ENCODE measurements at regions of chr9 and their contacts with region 1.

Region 1: GRCh38 chr9:15277400-15278090 is 29.5 kb downstream of the TTC39B start:
- DNase-seq: no peak
- H3K4me3 Mint-ChIP-seq: no peak overlapping the region
- H3K27ac Mint-ChIP-seq: no peak overlapping the region
- H3K4me1 Mint-ChIP-seq: peaks cover 15% of the 10 kb centered on the region
- H3K27me3 Mint-ChIP-seq: no peaks in the 10 kb centered on the region

Region 2: GRCh38 chr9:15142878-15143534 is 134.5 kb before region 1 on chr9:
- intact Hi-C with region 1: no loop called
- DNase-seq: no peak
- H3K4me3 Mint-ChIP-seq: no peak overlapping the region
- H3K27ac Mint-ChIP-seq: no peak overlapping the region
- H3K4me1 Mint-ChIP-seq: no peaks in the 10 kb centered on the region
- H3K27me3 Mint-ChIP-seq: peaks cover 10% of the 10 kb centered on the region

Region 3: DNA sequence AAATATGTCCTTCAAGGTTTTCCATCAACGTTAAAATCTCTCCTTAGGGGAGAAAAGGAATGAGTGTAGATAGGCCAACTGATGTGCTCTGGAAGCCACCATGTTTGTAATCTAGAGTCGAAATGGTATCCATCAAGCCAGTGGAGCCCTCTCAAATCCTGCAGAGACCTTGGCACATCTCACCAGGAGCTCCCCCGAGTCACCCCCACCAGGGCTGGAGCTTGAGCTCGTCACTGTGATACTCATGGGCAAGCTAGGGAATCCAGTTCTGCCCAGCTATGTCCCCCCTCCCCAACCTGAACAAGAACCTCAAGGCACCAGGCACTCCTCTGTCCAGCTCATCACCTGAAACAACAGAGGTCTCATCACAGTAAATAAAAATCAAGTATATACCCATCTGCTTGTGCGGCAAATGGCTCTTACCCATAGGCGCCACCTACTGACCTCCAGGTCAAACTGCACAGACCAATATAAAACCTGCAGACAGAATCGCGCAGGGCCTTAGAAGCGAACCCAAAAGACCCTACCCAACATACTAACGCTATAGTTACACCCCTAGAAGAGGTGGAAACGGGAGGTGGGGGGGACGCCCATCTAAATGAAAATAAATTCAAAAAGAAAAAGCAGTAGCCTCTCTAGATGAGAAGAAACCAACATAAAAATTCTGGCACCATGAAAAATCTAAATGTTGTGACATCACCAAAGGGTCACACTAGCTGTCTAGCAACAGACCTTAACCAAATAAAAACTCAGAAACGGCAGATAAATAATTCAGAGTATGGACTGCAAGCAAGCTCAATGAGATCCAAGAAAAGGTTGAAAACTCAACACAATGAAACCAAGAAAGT is 45.5 kb before region 1 on chr9:
- intact Hi-C with region 1: no loop called
- DNase-seq: no peak
- H3K4me3 Mint-ChIP-seq: no peak overlapping the region
- H3K27ac Mint-ChIP-seq: no peak overlapping the region
- H3K4me1 Mint-ChIP-seq: peaks cover 25% of the 10 kb centered on the region
- H3K27me3 Mint-ChIP-seq: no peaks in the 10 kb centered on the region

Region 4: GRCh38 chr9:15262581-15262980 is 15.0 kb before region 1 on chr9:
- intact Hi-C with region 1: no loop called
- DNase-seq: no peak
- H3K4me3 Mint-ChIP-seq: no peak overlapping the region
- H3K27ac Mint-ChIP-seq: no peak overlapping the region
- H3K4me1 Mint-ChIP-seq: peaks cover 6% of the 10 kb centered on the region
- H3K27me3 Mint-ChIP-seq: no peaks in the 10 kb centered on the region

Region 5: GRCh38 chr9:15357050-15357653 is 79.6 kb after region 1 on chr9:
- intact Hi-C with region 1: loop called (anchors 5 kb)
- DNase-seq: peak; percentile 34
- H3K4me3 Mint-ChIP-seq: no peak overlapping the region
- H3K27ac Mint-ChIP-seq: no peak overlapping the region
- H3K4me1 Mint-ChIP-seq: peaks cover 16% of the 10 kb centered on the region
- H3K27me3 Mint-ChIP-seq: no peaks in the 10 kb centered on the region

Region 6: GRCh38 chr9:15416880-15417279 is 139.3 kb after region 1 on chr9:
- intact Hi-C with region 1: loop called (anchors 2 kb)
- DNase-seq: no peak
- H3K4me3 Mint-ChIP-seq: no peak overlapping the region
- H3K27ac Mint-ChIP-seq: no peak overlapping the region
- H3K4me1 Mint-ChIP-seq: peaks cover 11% of the 10 kb centered on the region
- H3K27me3 Mint-ChIP-seq: peaks cover 18% of the 10 kb centered on the region

Region 7: DNA sequence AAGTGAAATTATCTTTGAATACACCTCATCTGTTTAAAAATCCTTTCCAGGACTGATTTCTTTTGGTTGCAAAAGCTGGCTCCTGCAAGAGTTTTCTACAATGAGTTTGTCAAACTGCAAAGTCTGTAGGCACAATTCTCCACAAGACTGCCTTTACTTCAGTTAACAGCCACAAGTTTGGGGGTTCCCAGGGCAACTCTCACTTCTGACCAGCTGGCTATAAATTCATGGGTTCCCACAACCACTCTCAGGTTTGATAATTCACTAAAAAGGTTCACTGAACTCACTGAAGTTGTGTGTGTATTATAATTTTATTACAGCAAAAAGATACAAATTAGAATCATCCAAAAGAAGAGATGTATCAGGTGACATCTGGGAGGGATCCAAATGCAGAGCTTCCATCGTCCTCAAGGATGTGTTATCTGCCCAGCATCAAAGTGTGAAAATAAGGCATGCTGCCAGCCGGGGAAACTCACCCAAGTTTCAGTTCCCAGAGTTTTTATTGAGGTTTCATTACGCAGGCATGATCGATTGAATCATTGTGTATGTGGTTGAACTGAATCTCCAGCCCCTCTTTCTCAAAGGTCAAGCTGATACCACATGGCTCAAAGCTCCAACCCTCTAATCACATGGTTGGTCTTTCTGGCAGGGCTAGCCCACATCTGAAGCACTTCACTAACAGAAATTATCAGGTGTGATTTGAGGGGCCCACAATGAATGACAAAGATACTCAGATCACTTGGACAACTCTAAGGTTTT is 252.2 kb after region 1 on chr9:
- intact Hi-C with region 1: loop called (anchors 1 kb)
- DNase-seq: no peak
- H3K4me3 Mint-ChIP-seq: no peak overlapping the region
- H3K27ac Mint-ChIP-seq: no peak overlapping the region
- H3K4me1 Mint-ChIP-seq: peaks cover 10% of the 10 kb centered on the region
- H3K27me3 Mint-ChIP-seq: peaks cover 5% of the 10 kb centered on the region